ENCODE measurements at regions of chr5 and their contacts with region 1.

Region 1: GRCh38 chr5:134904630-134905245 is at the start of gene PCBD2:
- DNase-seq: peak; percentile 81 to 95
- H3K4me3 ChIP-seq: peak within 1 kb of the TSS; percentile 99
- H3K27ac ChIP-seq: peak within 1 kb of the TSS; percentile 86
- H3K4me1 ChIP-seq: peaks cover 7% of the 10 kb centered on the region; the same call in 1 of the 2 replicates
- H3K27me3 ChIP-seq: no peaks in the 10 kb centered on the region
- CTCF ChIP-seq: peak; percentile 74
- total RNA-seq, gene PCBD2: 14.5 and 17.6 TPM in 2 replicates

Region 2: DNA sequence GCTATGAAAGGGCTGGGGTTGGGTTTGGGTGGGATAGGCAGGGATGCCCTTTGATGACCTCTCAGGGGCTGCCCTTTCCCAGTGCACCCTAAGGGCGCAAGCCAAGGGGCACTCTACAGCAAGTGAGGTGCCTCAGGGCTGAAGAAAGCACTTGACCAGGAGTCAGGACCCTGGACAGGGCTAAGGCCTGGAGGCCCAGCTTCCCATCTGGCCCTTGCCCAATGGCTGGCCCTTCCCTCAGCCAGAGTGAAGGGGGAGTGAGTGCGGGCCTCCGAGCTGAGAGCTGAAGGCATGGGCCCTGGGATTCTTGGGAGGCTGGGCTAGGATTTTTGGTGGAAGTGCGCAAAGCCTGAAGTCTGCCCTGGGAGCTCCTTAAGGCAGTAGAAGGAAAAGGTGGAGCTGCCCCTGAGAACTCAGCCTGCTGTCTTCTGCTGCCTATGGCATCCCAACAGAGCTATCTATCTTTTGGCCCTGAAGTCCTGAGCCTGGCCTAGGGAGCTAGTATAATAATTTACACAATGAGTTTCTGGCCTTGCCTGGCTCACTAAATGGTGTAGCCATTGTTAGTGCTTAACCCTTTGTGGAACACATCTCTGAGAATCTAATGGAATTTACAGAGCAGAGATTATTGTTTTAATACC is 362.9 kb before region 1 on chr5:
- CTCF ChIA-PET with region 1: interaction called, 15 read pairs
- POLR2A ChIA-PET with region 1: no interaction called
- intact Hi-C with region 1: no loop called
- DNase-seq: no peak
- H3K4me3 ChIP-seq: no peak overlapping the region
- H3K27ac ChIP-seq: no peak overlapping the region
- H3K4me1 ChIP-seq: no peaks in the 10 kb centered on the region
- H3K27me3 ChIP-seq: no peaks in the 10 kb centered on the region
- CTCF ChIP-seq: no peak

Region 3: DNA sequence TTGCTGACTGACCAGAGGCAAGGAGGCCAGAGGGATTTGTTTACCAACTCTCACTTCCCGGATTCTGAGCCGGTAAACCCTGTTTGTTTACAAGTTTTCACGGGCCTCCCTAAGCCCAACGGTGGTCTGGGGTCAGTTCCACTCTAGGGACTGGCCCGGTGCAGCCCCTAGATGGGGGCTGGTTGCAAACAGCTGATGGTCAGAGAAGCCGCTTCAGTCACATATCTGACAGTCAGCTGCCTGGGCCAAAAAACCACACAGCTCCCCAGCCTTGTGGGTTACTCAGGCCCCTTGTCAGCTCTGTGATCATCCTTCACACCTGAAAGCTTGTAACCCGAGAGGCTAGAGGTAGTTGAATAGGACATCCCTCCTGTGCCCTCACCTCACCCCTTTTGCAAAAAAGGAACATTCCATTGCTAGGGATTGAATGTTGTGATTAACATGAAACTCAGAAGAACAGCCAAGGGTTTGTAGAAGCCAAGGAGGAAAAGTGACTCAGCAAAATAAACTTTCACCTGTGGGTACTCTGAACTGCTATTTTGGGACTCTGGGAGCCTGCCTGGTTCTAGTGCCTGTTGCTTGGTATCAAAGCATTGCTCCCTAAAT is 312.5 kb before region 1 on chr5:
- CTCF ChIA-PET with region 1: interaction called, 5 read pairs
- POLR2A ChIA-PET with region 1: interaction called, 10 read pairs
- intact Hi-C with region 1: loop called (anchors 10 kb)
- DNase-seq: peak; percentile 61 to 94
- H3K4me3 ChIP-seq: peak overlapping the region; percentile 8; the same call in 1 of the 2 replicates
- H3K27ac ChIP-seq: peak overlapping the region; percentile 82
- H3K4me1 ChIP-seq: peaks cover 34% of the 10 kb centered on the region
- H3K27me3 ChIP-seq: no peaks in the 10 kb centered on the region
- CTCF ChIP-seq: no peak

Region 4: GRCh38 chr5:134845852-134846640 is 58.7 kb before region 1 on chr5 and contains the start of gene C5orf24:
- CTCF ChIA-PET with region 1: interaction called, 11 read pairs
- POLR2A ChIA-PET with region 1: no interaction called
- intact Hi-C with region 1: loop called (anchors 5 kb)
- DNase-seq: peak; percentile 79 to 89
- H3K4me3 ChIP-seq: peak within 1 kb of the TSS; percentile 74
- H3K27ac ChIP-seq: peak within 1 kb of the TSS; percentile 68
- H3K4me1 ChIP-seq: peaks cover 35% of the 10 kb centered on the region
- H3K27me3 ChIP-seq: no peaks in the 10 kb centered on the region
- CTCF ChIP-seq: no peak
- total RNA-seq, gene C5orf24: 16.4 and 29.2 TPM in 2 replicates

Region 5: DNA sequence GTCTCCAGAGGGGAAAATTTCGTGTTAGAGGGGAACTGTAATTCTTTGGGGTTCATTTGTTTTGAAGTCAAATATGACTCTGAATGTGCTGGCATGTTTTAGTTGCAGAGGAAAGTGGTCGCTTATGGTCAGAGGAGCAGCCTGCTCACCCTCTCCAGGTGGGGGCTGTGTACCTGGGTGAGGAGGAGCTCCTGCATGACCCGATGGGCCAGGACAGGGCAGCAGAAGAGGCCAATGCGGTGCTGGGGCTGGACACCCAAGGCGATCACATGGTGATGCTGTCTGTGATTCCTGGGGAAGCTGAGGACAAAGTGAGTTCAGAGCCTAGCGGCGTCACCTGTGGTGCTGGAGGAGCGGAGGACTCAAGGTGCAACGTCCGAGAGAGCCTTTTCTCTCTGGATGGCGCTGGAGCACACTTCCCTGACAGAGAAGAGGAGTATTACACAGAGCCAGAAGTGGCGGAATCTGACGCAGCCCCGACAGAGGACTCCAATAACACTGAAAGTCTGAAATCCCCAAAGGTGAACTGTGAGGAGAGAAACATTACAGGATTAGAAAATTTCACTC is 17.1 kb before region 1 on chr5:
- CTCF ChIA-PET with region 1: no interaction called
- POLR2A ChIA-PET with region 1: no interaction called
- intact Hi-C with region 1: no loop called
- DNase-seq: no peak
- H3K4me3 ChIP-seq: no peak overlapping the region
- H3K27ac ChIP-seq: no peak overlapping the region
- H3K4me1 ChIP-seq: no peaks in the 10 kb centered on the region
- H3K27me3 ChIP-seq: no peaks in the 10 kb centered on the region
- CTCF ChIP-seq: no peak

Region 6: GRCh38 chr5:135191084-135191826 is 286.5 kb after region 1 on chr5:
- CTCF ChIA-PET with region 1: interaction called, 7 read pairs
- POLR2A ChIA-PET with region 1: interaction called, 4 read pairs
- intact Hi-C with region 1: loop called (anchors 1 kb)
- DNase-seq: peak; percentile 70 to 86
- H3K4me3 ChIP-seq: peak overlapping the region; percentile 59
- H3K27ac ChIP-seq: no peak overlapping the region
- H3K4me1 ChIP-seq: peaks cover 24% of the 10 kb centered on the region
- H3K27me3 ChIP-seq: no peaks in the 10 kb centered on the region
- CTCF ChIP-seq: peak; percentile 94

Measured in PC-9 (cell line).